ENCODE measurements at regions of chr1 and their contacts with region 1.

Region 1: GRCh38 chr1:224329842-224330753 is at the start of gene NVL:
- DNase-seq: peak; percentile 62 to 91 (median 79)
- ATAC-seq: peak; percentile 89
- H3K4me3 ChIP-seq: peak within 1 kb of the TSS; percentile 99
- H3K4me3 Mint-ChIP-seq: peak within 1 kb of the TSS; percentile 94
- H3K27ac ChIP-seq: peak within 1 kb of the TSS; percentile 77 to 98
- H3K27ac Mint-ChIP-seq: peak within 1 kb of the TSS; percentile 100
- H3K4me1 ChIP-seq: peaks cover 22% of the 10 kb centered on the region
- H3K4me1 Mint-ChIP-seq: peaks cover 50% of the 10 kb centered on the region
- H3K27me3 ChIP-seq: no peaks in the 10 kb centered on the region
- H3K27me3 Mint-ChIP-seq: no peaks in the 10 kb centered on the region
- CTCF ChIP-seq: no peak
- total RNA-seq, gene NVL: 11.1 to 16.6 TPM

Region 2: GRCh38 chr1:223142795-223143536 is 1187.1 kb before region 1 on chr1 and contains the start of gene TLR5:
- CTCF ChIA-PET with region 1: no interaction called
- POLR2A ChIA-PET with region 1: no interaction called
- intact Hi-C with region 1: loop called in 1 of 2 experiments (anchors 10 kb)
- DNase-seq: peak; percentile 75 to 94 (median 90)
- ATAC-seq: peak; percentile 91
- H3K4me3 ChIP-seq: peak within 1 kb of the TSS; percentile 54
- H3K4me3 Mint-ChIP-seq: peak within 1 kb of the TSS; percentile 73
- H3K27ac ChIP-seq: peak within 1 kb of the TSS; percentile 21 to 25
- H3K27ac Mint-ChIP-seq: peak within 1 kb of the TSS; percentile 52
- H3K4me1 ChIP-seq: peaks cover 16% of the 10 kb centered on the region
- H3K4me1 Mint-ChIP-seq: peaks cover 21% of the 10 kb centered on the region
- H3K27me3 ChIP-seq: no peaks in the 10 kb centered on the region
- H3K27me3 Mint-ChIP-seq: no peaks in the 10 kb centered on the region
- CTCF ChIP-seq: peak; percentile 28
- total RNA-seq, gene TLR5: 1.1 to 1.2 TPM

Region 3: GRCh38 chr1:223700942-223701637 is 629.0 kb before region 1 on chr1:
- CTCF ChIA-PET with region 1: no interaction called
- POLR2A ChIA-PET with region 1: no interaction called
- intact Hi-C with region 1: loop called (anchors 2 to 5 kb)
- DNase-seq: no peak
- ATAC-seq: no peak
- H3K4me3 ChIP-seq: no peak overlapping the region
- H3K4me3 Mint-ChIP-seq: no peak overlapping the region
- H3K27ac ChIP-seq: no peak overlapping the region
- H3K27ac Mint-ChIP-seq: no peak overlapping the region
- H3K4me1 ChIP-seq: peaks cover 7% of the 10 kb centered on the region
- H3K4me1 Mint-ChIP-seq: peaks cover 6% of the 10 kb centered on the region
- H3K27me3 ChIP-seq: no peaks in the 10 kb centered on the region
- H3K27me3 Mint-ChIP-seq: no peaks in the 10 kb centered on the region
- CTCF ChIP-seq: no peak

Region 4: GRCh38 chr1:223811634-223812415 is 518.3 kb before region 1 on chr1:
- CTCF ChIA-PET with region 1: no interaction called
- POLR2A ChIA-PET with region 1: no interaction called
- intact Hi-C with region 1: loop called in 1 of 2 experiments (anchors 10 kb)
- DNase-seq: peak in 2 of 9 experiments; percentile 52 to 64
- ATAC-seq: peak; percentile 74
- H3K4me3 ChIP-seq: no peak overlapping the region
- H3K4me3 Mint-ChIP-seq: no peak overlapping the region
- H3K27ac ChIP-seq: no peak overlapping the region
- H3K27ac Mint-ChIP-seq: no peak overlapping the region
- H3K4me1 ChIP-seq: peaks cover 6% of the 10 kb centered on the region
- H3K4me1 Mint-ChIP-seq: peaks cover 25% of the 10 kb centered on the region
- H3K27me3 ChIP-seq: no peaks in the 10 kb centered on the region
- H3K27me3 Mint-ChIP-seq: no peaks in the 10 kb centered on the region
- CTCF ChIP-seq: peak; percentile 73

Region 5: DNA sequence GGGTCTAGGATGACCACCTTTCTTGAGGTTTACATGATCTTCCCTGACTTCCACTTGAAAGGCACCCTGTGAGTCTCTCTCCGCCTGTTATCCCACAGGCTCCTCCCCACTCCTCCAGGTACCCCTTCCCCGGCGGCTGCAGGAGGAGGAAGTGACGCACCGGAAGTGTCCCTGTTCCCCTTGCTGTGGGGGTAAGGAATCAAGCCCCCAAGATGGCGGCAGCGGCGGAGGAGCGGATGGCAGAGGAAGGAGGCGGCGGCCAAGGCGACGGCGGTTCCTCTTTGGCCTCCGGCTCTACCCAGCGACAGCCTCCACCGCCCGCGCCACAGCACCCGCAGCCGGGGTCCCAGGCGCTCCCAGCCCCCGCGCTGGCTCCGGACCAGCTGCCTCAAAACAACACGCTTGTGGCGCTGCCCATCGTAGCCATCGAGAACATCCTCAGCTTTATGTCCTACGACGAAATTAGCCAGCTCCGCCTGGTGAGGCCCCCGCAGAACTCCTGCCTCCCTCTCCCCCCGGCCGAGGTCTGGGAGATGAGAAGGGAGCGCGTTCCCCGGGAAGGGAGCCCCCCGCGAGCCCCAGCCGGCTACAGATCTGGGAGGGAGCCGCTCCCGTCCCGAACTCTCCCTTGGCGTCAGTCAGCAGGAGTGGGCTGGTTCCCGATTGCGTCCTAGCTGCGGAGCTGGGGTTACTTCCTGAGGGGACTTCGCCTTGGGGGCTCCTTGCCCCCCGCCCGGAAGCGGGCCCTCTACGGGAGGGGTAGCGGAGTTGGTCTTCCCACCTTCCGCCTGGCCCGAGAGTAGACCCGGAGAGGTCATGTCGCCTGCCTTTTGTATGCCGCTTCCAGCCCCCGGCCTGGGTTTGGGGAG is 215.9 kb before region 1 on chr1 and contains the start of gene FBXO28:
- CTCF ChIA-PET with region 1: interaction called, 27 read pairs
- POLR2A ChIA-PET with region 1: interaction called, 7 read pairs
- intact Hi-C with region 1: loop called (anchors 1 kb)
- DNase-seq: peak; percentile 86 to 96 (median 94)
- ATAC-seq: peak; percentile 92
- H3K4me3 ChIP-seq: peak within 1 kb of the TSS; percentile 78 to 82
- H3K4me3 Mint-ChIP-seq: peak within 1 kb of the TSS; percentile 92
- H3K27ac ChIP-seq: peak within 1 kb of the TSS; percentile 94 to 97
- H3K27ac Mint-ChIP-seq: peak within 1 kb of the TSS; percentile 95
- H3K4me1 ChIP-seq: peaks cover 22% of the 10 kb centered on the region
- H3K4me1 Mint-ChIP-seq: peaks cover 34% of the 10 kb centered on the region
- H3K27me3 ChIP-seq: no peaks in the 10 kb centered on the region
- H3K27me3 Mint-ChIP-seq: peaks cover 12% of the 10 kb centered on the region
- CTCF ChIP-seq: no peak
- total RNA-seq, gene FBXO28: 43.4 to 44.2 TPM

Region 6: DNA sequence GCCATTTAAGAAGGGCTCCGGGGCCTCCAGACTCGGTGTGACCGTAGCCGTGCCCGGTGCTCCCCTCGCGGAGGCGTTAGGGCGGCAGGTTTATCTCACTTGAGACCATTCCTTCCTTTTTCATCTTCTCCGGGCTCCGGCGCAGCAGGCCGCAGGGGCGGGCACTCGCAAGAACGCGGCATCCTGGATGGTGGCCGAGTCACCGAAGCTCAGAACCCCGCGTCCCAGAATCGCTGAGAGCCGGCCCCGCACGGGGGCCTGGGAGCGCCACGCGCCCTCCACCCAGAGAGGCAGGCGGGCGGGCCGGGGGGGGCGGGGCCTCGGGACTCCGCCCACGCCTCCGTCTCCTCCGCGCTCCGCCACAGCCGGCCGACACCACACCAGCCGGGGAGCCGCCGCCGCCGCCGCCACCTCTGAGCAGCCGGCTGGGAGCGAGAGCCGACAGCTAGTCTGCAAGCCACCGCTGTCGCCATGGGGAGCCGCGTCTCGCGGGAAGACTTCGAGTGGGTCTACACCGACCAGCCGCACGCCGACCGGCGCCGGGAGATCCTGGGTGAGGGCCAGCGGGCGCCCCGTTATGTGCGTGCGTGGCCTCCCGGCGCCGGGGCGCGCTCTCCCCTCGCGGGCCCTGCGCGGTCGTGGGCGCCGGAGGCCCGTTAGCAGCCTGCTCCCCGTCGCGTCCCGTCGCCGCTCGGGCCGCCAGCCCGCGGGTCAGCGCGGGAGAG is 147.1 kb before region 1 on chr1 and contains the start of gene DEGS1:
- CTCF ChIA-PET with region 1: no interaction called
- POLR2A ChIA-PET with region 1: interaction called, 10 read pairs
- intact Hi-C with region 1: loop called in 1 of 2 experiments (anchors 1 kb)
- DNase-seq: peak; percentile 71 to 92 (median 84)
- ATAC-seq: peak; percentile 77
- H3K4me3 ChIP-seq: peak within 1 kb of the TSS; percentile 70 to 90
- H3K4me3 Mint-ChIP-seq: peak within 1 kb of the TSS; percentile 90
- H3K27ac ChIP-seq: peak within 1 kb of the TSS; percentile 88 to 94
- H3K27ac Mint-ChIP-seq: peak within 1 kb of the TSS; percentile 95
- H3K4me1 ChIP-seq: peaks cover 33% of the 10 kb centered on the region
- H3K4me1 Mint-ChIP-seq: peaks cover 48% of the 10 kb centered on the region
- H3K27me3 ChIP-seq: no peaks in the 10 kb centered on the region
- H3K27me3 Mint-ChIP-seq: no peaks in the 10 kb centered on the region
- CTCF ChIP-seq: no peak
- total RNA-seq, gene DEGS1: 52.1 to 54.7 TPM

Region 7: DNA sequence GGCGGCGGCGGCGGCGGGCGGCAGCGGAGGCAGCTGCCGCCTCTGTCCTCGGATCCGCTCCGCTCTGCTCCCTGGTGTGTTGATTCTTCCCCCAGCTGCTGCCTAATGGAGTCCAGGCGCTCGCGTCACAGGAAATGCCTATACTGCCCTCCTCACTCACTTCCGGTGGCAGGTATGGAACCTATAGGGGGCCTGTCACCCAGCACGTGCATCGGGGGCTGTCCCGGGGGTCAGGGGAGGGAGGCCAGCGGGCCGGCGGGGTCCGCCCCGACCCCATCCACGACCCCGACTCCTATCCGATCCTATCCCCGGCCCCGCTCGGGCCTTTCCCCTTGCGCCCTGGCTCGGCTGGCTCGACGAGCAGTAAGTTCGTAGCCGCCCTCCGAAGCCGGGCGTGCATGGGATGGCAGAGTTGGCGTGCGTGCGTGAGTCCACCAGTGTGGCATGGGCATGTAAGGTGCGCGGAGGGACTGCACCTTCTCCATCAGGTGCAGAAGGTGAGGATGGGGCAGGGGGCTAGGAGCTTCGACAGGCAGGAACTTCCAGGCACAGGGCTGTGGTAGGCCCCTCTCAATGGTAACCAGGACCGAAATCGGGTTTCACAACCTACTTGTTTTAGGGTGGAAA is 104.7 kb after region 1 on chr1 and contains the start of gene WDR26:
- CTCF ChIA-PET with region 1: no interaction called
- POLR2A ChIA-PET with region 1: no interaction called
- intact Hi-C with region 1: loop called (anchors 1 to 2 kb)
- DNase-seq: peak; percentile 65 to 94 (median 83)
- ATAC-seq: peak; percentile 81
- H3K4me3 ChIP-seq: peak within 1 kb of the TSS; percentile 84 to 99
- H3K4me3 Mint-ChIP-seq: peak within 1 kb of the TSS; percentile 97
- H3K27ac ChIP-seq: peak within 1 kb of the TSS; percentile 94 to 98
- H3K27ac Mint-ChIP-seq: peak within 1 kb of the TSS; percentile 99
- H3K4me1 ChIP-seq: peaks cover 50% of the 10 kb centered on the region
- H3K4me1 Mint-ChIP-seq: peaks cover 56% of the 10 kb centered on the region
- H3K27me3 ChIP-seq: no peaks in the 10 kb centered on the region
- H3K27me3 Mint-ChIP-seq: no peaks in the 10 kb centered on the region
- CTCF ChIP-seq: peak; percentile 18
- total RNA-seq, gene WDR26: 176 to 181 TPM

Region 8: GRCh38 chr1:224579526-224579925 is 249.4 kb after region 1 on chr1:
- CTCF ChIA-PET with region 1: no interaction called
- POLR2A ChIA-PET with region 1: no interaction called
- intact Hi-C with region 1: no loop called
- DNase-seq: no peak
- ATAC-seq: no peak
- H3K4me3 ChIP-seq: no peak overlapping the region
- H3K4me3 Mint-ChIP-seq: no peak overlapping the region
- H3K27ac ChIP-seq: no peak overlapping the region
- H3K27ac Mint-ChIP-seq: no peak overlapping the region
- H3K4me1 ChIP-seq: no peaks in the 10 kb centered on the region
- H3K4me1 Mint-ChIP-seq: no peaks in the 10 kb centered on the region
- H3K27me3 ChIP-seq: no peaks in the 10 kb centered on the region
- H3K27me3 Mint-ChIP-seq: peaks cover 3% of the 10 kb centered on the region
- CTCF ChIP-seq: no peak